PC-9 (cell line): ENCODE measurements at regions of chr11 and their contacts with region 1.

Region 1: GRCh38 chr11:71420455-71421241 is 27.5 kb downstream of the DHCR7 start:
- DNase-seq: peak; percentile 48 to 58
- H3K4me3 ChIP-seq: no peak overlapping the region
- H3K27ac ChIP-seq: no peak overlapping the region
- H3K4me1 ChIP-seq: peaks cover 10% of the 10 kb centered on the region
- H3K27me3 ChIP-seq: peaks cover 11% of the 10 kb centered on the region; the same call in 1 of the 2 replicates
- CTCF ChIP-seq: peak; percentile 87

Region 2: DNA sequence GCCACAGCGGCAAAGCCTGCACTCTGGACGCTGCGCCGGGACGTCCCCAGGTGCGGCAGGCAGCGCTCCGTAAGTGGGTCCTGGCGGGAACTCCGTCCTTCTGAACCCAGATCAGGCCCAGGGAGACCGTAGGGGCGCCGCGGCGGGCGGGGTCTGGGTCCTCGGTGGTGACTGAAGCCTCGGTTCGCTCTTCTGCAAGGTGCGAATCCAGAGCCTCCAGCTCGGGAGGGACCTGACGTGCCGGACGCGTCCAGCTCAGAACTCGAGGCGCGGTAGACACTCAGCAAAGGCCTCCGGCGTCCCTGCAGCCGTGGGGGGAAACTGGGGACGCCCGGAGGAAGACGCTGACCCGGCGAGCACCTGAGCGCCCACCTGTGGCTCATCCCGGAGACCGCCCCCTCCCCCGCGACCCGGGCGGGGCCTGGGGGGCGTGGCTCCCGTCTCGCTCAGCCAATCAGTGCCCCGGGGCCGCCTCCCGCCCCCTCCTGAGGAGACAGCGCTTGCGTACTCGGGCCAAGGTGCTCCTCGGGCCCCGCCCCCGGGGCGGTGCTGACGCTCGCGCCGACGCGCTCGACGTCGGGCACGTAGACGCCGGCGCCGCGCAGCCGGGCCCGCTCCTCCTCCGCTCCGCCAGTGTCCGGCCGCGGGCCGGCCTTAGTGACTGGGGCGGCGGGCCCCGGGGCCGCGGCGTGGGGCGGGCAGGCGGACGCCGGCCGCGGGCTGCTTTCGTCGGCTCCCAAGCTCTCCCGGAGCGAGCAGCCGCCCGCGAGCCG is 1150.4 kb before region 1 on chr11 and contains the start of gene PPFIA1:
- CTCF ChIA-PET with region 1: no interaction called
- POLR2A ChIA-PET with region 1: interaction called, 11 read pairs
- intact Hi-C with region 1: no loop called
- DNase-seq: peak; percentile 90 to 99
- H3K4me3 ChIP-seq: peak within 1 kb of the TSS; percentile 85
- H3K27ac ChIP-seq: peak within 1 kb of the TSS; percentile 31
- H3K4me1 ChIP-seq: peaks cover 25% of the 10 kb centered on the region
- H3K27me3 ChIP-seq: no peaks in the 10 kb centered on the region
- CTCF ChIP-seq: no peak
- total RNA-seq, gene PPFIA1: 81.1 and 86.8 TPM in 2 replicates

Region 3: GRCh38 chr11:70467201-70468085 is 953.2 kb before region 1 on chr11:
- CTCF ChIA-PET with region 1: no interaction called
- POLR2A ChIA-PET with region 1: no interaction called
- intact Hi-C with region 1: loop called (anchors 2 kb)
- DNase-seq: peak in 1 of 2 experiments; percentile 70
- H3K4me3 ChIP-seq: no peak overlapping the region
- H3K27ac ChIP-seq: no peak overlapping the region
- H3K4me1 ChIP-seq: no peaks in the 10 kb centered on the region
- H3K27me3 ChIP-seq: no peaks in the 10 kb centered on the region
- CTCF ChIP-seq: peak; percentile 99

Region 4: GRCh38 chr11:70815485-70815861 is 605.2 kb before region 1 on chr11:
- CTCF ChIA-PET with region 1: no interaction called
- POLR2A ChIA-PET with region 1: no interaction called
- intact Hi-C with region 1: loop called (anchors 1 kb)
- DNase-seq: no peak
- H3K4me3 ChIP-seq: no peak overlapping the region
- H3K27ac ChIP-seq: no peak overlapping the region
- H3K4me1 ChIP-seq: no peaks in the 10 kb centered on the region
- H3K27me3 ChIP-seq: no peaks in the 10 kb centered on the region
- CTCF ChIP-seq: no peak

Region 5: DNA sequence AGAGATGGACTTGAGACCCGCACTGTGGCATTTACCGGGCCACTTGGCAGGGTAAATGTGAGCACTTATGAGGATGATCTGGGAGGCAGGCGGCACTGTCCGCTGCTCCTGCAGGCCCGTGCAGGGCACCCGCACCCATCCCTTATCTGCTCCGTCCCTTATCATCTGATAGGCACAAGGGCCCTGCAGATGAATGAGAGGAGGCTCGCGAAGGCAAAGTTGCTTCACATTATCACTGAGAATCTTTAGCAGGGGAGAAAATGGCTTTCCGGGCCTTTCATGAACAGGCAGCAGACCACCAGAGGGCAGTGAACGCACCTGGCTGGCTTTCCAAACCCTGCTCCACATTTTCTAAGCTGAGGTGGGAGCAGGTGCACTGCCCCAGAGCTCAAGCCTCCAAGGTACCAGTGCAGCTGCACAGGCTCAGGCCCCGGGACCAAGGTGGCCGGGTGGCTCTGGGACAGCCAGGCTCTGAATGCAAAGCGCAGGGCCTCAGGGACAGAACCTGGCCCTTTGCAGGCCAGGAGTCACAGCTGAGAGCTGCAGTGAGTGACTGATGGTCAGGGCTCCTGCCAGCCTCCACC is 333.9 kb before region 1 on chr11:
- CTCF ChIA-PET with region 1: interaction called, 3 read pairs
- POLR2A ChIA-PET with region 1: no interaction called
- intact Hi-C with region 1: loop called (anchors 1 kb)
- DNase-seq: peak in 1 of 2 experiments; percentile 46
- H3K4me3 ChIP-seq: no peak overlapping the region
- H3K27ac ChIP-seq: no peak overlapping the region
- H3K4me1 ChIP-seq: no peaks in the 10 kb centered on the region
- H3K27me3 ChIP-seq: no peaks in the 10 kb centered on the region
- CTCF ChIP-seq: peak; percentile 73

Region 6: DNA sequence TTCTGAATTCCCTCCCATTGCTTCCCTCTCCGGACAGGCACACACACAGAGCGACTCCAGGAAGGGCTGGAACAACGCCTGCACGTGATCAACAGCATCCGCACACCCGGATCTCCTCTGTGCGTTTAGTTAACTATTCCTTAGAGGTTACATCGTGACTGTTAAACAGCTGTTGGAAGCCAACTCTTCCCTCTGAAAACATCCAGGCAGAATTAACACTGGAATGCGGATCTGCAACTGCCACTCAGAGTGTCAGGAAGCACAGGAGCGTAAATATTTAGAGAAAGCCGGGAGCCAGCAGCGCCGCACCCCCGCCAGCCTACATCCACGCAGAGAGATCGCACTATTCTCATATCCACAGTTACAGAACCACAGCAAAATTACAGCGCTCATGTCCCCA is 214.5 kb before region 1 on chr11:
- CTCF ChIA-PET with region 1: no interaction called
- POLR2A ChIA-PET with region 1: no interaction called
- intact Hi-C with region 1: no loop called
- DNase-seq: no peak
- H3K4me3 ChIP-seq: no peak overlapping the region
- H3K27ac ChIP-seq: no peak overlapping the region
- H3K4me1 ChIP-seq: no peaks in the 10 kb centered on the region
- H3K27me3 ChIP-seq: no peaks in the 10 kb centered on the region
- CTCF ChIP-seq: no peak